Activated CD4-positive, alpha-beta T cell treated with anti-CD3 and anti-CD28 coated beads for 36 hours (primary cell): ENCODE measurements at regions of chr1 and their contacts with region 1.

Region 1: DNA sequence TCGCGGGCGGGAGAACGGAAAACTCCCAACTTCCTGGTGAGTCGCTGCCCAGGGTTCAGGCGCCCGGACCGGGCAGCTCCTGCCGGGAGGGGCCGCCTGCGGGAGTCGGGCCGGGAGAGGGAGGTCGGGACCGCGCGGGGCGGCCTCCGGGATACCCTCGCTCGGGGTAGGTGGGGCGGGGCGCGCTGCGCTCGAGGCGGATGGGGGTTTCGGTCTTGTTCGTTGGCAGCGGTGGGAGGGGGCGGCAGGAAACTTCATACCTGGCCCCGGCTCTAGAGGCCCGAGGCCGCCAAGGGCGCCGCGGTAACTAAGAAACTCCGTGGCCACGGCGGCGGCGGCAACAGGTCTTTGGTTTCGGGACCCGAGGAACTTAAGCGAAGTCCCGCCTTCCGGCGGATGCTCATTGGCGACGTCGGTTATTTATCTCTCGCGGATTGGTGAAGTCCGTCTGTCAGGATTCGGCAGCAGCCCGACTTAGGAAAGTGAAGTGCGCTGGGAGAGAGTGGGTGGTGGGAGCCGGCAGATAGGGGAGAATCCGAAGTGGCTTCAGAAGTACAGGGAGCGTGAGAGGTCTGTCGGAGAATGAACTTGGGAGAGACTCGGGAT is 546 bp downstream of the NEK7 start:
- DNase-seq: peak; percentile 89
- ATAC-seq: peak; percentile 29
- H3K4me3 Mint-ChIP-seq: peak overlapping the region; percentile 94
- H3K27ac Mint-ChIP-seq: peak overlapping the region; percentile 99
- H3K4me1 Mint-ChIP-seq: peaks cover 34% of the 10 kb centered on the region
- H3K27me3 Mint-ChIP-seq: no peaks in the 10 kb centered on the region

Region 2: GRCh38 chr1:197146197-197146889 is 1011.0 kb before region 1 on chr1 and contains the start of gene ASPM:
- CTCF ChIA-PET with region 1: no interaction called
- POLR2A ChIA-PET with region 1: no interaction called
- intact Hi-C with region 1: loop called in 1 of 2 experiments (anchors 5 kb)
- DNase-seq: peak; percentile 97
- ATAC-seq: peak; percentile 98
- H3K4me3 Mint-ChIP-seq: peak within 1 kb of the TSS; percentile 97
- H3K27ac Mint-ChIP-seq: peak within 1 kb of the TSS; percentile 91
- H3K4me1 Mint-ChIP-seq: peaks cover 13% of the 10 kb centered on the region
- H3K27me3 Mint-ChIP-seq: peaks cover 3% of the 10 kb centered on the region
- total RNA-seq, gene ASPM: 47.8 to 49.5 TPM

Region 3: GRCh38 chr1:197902454-197903195 is 254.7 kb before region 1 on chr1 and contains the start of gene C1orf53:
- CTCF ChIA-PET with region 1: no interaction called
- POLR2A ChIA-PET with region 1: no interaction called
- intact Hi-C with region 1: loop called in 1 of 2 experiments (anchors 1 kb)
- DNase-seq: peak; percentile 87
- ATAC-seq: peak; percentile 95
- H3K4me3 Mint-ChIP-seq: peak within 1 kb of the TSS; percentile 76
- H3K27ac Mint-ChIP-seq: peak within 1 kb of the TSS; percentile 88
- H3K4me1 Mint-ChIP-seq: peaks cover 14% of the 10 kb centered on the region
- H3K27me3 Mint-ChIP-seq: peaks cover 37% of the 10 kb centered on the region
- total RNA-seq, gene C1orf53: 0.66 TPM in 1 of 2 experiments, not detected in the other

Region 4: GRCh38 chr1:197984289-197984688 is 173.1 kb before region 1 on chr1:
- CTCF ChIA-PET with region 1: no interaction called
- POLR2A ChIA-PET with region 1: no interaction called
- intact Hi-C with region 1: no loop called
- DNase-seq: no peak
- ATAC-seq: no peak
- H3K4me3 Mint-ChIP-seq: no peak overlapping the region
- H3K27ac Mint-ChIP-seq: no peak overlapping the region
- H3K4me1 Mint-ChIP-seq: no peaks in the 10 kb centered on the region
- H3K27me3 Mint-ChIP-seq: peaks cover 1% of the 10 kb centered on the region

Region 5: DNA sequence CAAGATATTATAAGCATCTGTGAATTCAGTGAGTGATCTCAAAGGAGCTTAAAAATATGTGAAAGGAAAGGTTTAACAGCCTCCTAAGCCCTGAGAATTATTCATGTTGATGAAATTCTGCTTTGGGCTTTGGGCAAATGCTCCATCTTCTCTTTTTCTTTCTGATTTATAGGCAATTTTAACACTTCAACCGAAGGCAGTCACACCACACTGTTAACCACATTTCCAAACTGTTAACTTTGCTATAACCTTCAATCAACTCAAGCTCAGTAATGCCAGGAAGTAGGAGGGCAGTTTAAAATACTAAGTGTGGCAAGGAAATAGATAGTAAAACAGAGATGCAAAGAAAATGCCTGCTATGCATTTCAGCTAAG is 54.9 kb before region 1 on chr1:
- CTCF ChIA-PET with region 1: no interaction called
- POLR2A ChIA-PET with region 1: no interaction called
- intact Hi-C with region 1: loop called in 1 of 2 experiments (anchors 5 kb)
- DNase-seq: no peak
- ATAC-seq: peak; percentile 68
- H3K4me3 Mint-ChIP-seq: no peak overlapping the region
- H3K27ac Mint-ChIP-seq: peak overlapping the region; percentile 21
- H3K4me1 Mint-ChIP-seq: peaks cover 21% of the 10 kb centered on the region
- H3K27me3 Mint-ChIP-seq: no peaks in the 10 kb centered on the region

Region 6: DNA sequence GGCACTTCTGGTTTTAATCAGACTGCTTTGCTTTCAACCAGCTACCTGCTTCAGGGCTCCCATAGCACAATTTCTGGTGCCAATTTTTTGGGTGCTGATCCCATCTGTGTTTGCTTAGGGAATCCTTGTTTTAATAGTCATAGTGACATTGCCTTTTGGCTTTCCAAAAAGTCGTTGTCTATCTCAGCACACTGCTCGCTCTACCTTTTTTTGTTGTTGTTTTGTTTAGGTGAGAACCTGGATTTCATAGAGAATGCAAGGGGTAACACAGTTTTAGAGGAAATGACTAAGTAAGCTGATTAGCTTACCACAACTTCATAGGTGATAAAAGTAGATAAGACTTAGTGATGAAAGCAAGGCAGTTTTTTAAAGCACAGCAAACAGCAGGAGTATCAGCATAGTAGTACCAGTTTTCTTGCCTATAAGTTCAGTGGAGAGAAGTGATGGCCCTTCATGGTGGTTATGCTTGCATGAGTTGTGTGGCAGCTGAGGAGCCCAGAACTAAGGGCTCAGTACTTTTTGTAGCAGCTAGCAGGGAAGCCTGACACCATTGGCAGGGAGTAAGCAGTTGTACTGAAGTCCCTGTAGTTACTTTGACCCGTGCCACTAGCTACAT is 30.7 kb after region 1 on chr1:
- CTCF ChIA-PET with region 1: interaction called, 4 read pairs
- POLR2A ChIA-PET with region 1: interaction called, 5 read pairs
- intact Hi-C with region 1: loop called (anchors 1 to 2 kb)
- DNase-seq: no peak
- ATAC-seq: peak; percentile 75
- H3K4me3 Mint-ChIP-seq: peak overlapping the region; percentile 19
- H3K27ac Mint-ChIP-seq: peak overlapping the region; percentile 62
- H3K4me1 Mint-ChIP-seq: peaks cover 79% of the 10 kb centered on the region
- H3K27me3 Mint-ChIP-seq: no peaks in the 10 kb centered on the region

Region 7: GRCh38 chr1:198359024-198359653 is 201.8 kb after region 1 on chr1:
- CTCF ChIA-PET with region 1: interaction called, 3 read pairs
- POLR2A ChIA-PET with region 1: no interaction called
- intact Hi-C with region 1: loop called (anchors 5 kb)
- DNase-seq: no peak
- ATAC-seq: no peak
- H3K4me3 Mint-ChIP-seq: no peak overlapping the region
- H3K27ac Mint-ChIP-seq: no peak overlapping the region
- H3K4me1 Mint-ChIP-seq: peaks cover 5% of the 10 kb centered on the region
- H3K27me3 Mint-ChIP-seq: no peaks in the 10 kb centered on the region

Region 8: DNA sequence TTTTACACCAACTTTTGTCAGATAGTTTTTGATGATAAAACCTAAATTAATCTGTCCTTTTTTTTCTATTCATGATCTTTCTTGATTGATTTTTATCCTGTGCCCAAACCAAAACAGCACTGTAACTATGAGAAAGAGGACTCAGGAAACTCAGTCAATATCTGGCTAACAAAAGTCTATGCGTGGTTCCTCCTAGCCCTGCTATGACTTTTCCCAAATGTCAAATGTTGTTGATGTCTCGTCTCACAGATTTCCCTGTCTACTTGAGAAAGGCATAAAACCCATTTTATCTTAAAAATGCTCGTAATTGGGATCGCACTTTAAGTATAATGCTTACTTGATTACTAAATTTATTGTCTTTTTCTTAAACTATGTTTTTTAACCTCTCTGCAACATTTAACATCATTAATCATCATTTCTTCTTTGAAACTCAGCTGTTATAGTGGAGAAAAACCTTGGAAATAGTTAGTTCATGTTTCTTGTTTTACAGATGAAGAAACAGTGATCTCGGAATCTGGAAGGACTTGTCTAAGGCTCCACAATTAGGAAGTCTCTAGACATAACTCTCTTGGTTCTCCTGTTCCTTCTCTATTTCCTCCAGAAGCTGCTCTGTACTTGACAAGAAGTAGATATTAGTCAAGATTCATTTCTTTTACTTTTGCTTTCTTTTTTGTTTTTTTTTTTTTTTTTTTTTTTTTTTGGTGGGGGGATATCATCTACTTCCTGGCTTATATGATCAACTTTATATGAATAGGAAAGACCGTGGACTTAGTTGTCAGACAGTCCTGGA is 455.3 kb after region 1 on chr1:
- CTCF ChIA-PET with region 1: no interaction called
- POLR2A ChIA-PET with region 1: no interaction called
- intact Hi-C with region 1: loop called in 1 of 2 experiments (anchors 5 kb)
- DNase-seq: no peak
- ATAC-seq: peak; percentile 48
- H3K4me3 Mint-ChIP-seq: peak overlapping the region; percentile 77
- H3K27ac Mint-ChIP-seq: peak overlapping the region; percentile 99
- H3K4me1 Mint-ChIP-seq: peaks cover 83% of the 10 kb centered on the region
- H3K27me3 Mint-ChIP-seq: no peaks in the 10 kb centered on the region

Region 9: DNA sequence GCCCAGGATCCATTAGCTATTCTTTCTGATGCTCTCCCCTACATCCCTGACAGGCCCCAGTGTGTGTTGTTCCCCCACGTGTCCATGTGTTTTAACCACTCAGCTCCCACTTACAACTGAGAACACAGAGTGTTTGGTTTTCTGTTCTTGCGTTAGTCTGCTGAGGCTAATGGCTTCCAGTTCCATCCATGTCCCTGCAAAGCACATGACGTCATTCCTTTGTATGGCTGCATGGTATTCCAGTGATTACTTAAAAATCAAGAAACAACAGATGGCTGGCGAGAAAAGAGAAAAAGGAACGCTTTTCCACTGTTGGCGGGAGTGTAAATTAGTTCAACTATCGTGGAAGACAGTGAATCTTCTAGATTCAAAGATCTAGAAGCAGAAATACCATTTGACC is 1037.5 kb after region 1 on chr1:
- CTCF ChIA-PET with region 1: no interaction called
- POLR2A ChIA-PET with region 1: no interaction called
- intact Hi-C with region 1: no loop called
- DNase-seq: no peak
- ATAC-seq: no peak
- H3K4me3 Mint-ChIP-seq: no peak overlapping the region
- H3K27ac Mint-ChIP-seq: no peak overlapping the region
- H3K4me1 Mint-ChIP-seq: no peaks in the 10 kb centered on the region
- H3K27me3 Mint-ChIP-seq: no peaks in the 10 kb centered on the region